ENCODE measurements at regions of chr20 and their contacts with region 1.

Region 1: DNA sequence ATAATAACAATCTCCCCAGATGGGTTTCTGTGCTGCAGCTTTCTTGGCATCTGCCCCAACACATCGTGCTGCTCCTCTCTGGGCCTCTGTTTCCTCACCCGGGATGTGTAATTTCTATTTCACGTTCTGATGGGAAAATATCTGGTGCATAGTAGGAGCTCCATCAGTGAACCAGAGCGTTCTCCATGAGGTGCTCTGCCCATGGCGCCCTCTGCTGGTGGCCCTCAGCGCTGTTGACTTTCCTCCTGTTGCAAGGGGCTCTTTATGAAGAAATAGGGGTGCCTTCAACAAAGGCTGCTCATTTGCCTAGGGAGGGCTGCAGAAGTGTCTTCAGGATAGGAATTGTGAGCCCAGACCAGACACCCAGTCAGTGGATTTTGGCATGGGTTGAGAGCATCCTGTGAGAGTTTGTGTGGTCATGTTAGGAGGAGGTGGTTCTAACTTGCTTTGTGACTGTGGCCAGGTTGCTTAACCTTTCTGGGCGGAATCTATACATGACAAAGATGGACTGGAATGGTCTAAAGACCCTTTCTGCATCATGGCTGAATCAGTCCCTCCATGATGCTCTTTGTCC is 8.1 kb downstream of the SCRT2 start:
- DNase-seq: no peak
- ATAC-seq: peak; percentile 87
- H3K4me3 ChIP-seq: no peak overlapping the region
- H3K27ac ChIP-seq: no peak overlapping the region
- H3K4me1 ChIP-seq: peaks cover 9 to 10% of the 10 kb centered on the region in 2 experiments; a peak in 3 of 4 replicates
- H3K27me3 ChIP-seq: no peaks in the 10 kb centered on the region
- CTCF ChIP-seq: peak; percentile 89 to 99 (median 97)
- POLR2A ChIP-seq: no peak
- RAD21 ChIP-seq: peak; percentile 68

Region 2: GRCh38 chr20:444862-445426 is 222.5 kb before region 1 on chr20:
- CTCF ChIA-PET with region 1: no interaction called
- POLR2A ChIA-PET with region 1: no interaction called
- RAD21 ChIA-PET with region 1: no interaction called
- intact Hi-C with region 1: no loop called
- DNase-seq: no peak
- ATAC-seq: no peak
- H3K4me3 ChIP-seq: no peak overlapping the region
- H3K27ac ChIP-seq: no peak overlapping the region
- H3K4me1 ChIP-seq: 0 out of 4 replicates have a peak, but pooled peaks cover 0 to 4% of the 10 kb centered on the region in 2 experiments
- H3K27me3 ChIP-seq: no peaks in the 10 kb centered on the region
- CTCF ChIP-seq: no peak
- POLR2A ChIP-seq: no peak
- RAD21 ChIP-seq: no peak

Region 3: DNA sequence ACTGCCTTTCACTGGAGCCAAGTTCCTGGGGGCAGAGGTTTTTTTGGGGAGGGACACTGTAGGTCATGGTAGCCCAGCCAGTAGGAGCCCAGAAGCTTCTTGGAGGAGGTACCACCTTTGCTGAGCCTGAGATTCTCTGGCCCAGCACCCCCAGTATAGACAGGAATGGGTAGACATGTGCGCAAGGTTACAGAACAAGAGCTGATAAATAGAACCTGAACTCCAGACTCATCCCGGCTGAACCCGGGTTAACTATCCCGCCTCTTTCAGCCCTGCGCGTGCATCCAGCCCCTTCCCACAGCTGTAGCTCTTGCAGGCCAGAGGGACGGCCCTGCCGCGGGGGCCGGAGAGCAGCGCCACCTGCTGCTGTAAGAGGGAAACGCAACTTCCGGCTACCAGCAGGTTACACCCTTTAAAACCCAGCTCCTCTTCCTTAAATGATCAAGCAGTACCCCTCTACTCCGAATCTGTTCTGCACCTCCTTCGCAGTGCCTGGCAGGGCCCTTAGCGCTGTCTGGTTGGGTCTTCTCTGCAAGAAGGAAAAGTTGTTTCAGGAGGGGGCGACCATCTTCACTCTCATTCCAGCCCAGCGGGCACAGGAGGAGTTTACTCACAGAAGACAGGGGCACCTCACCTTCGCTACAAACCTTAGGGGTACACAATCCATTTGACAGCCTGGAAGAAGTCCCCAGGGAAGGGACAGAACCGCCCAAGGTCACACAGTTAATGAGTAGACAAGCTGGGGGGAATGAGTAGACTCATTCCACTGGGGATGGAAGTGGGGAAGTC is 22.0 kb before region 1 on chr20:
- CTCF ChIA-PET with region 1: interaction called, 14 read pairs
- POLR2A ChIA-PET with region 1: interaction called, 5 read pairs
- RAD21 ChIA-PET with region 1: no interaction called
- intact Hi-C with region 1: no loop called
- DNase-seq: peak; percentile 41
- ATAC-seq: peak; percentile 88
- H3K4me3 ChIP-seq: no peak overlapping the region
- H3K27ac ChIP-seq: peak overlapping the region; percentile 16
- H3K4me1 ChIP-seq: peaks cover 13 to 32% of the 10 kb centered on the region in 2 experiments
- H3K27me3 ChIP-seq: no peaks in the 10 kb centered on the region
- CTCF ChIP-seq: peak; percentile 78 to 94 (median 93)
- POLR2A ChIP-seq: no peak
- RAD21 ChIP-seq: peak; percentile 84

Region 4: GRCh38 chr20:653110-653589 is 14.3 kb before region 1 on chr20 and contains the start of gene SRXN1:
- CTCF ChIA-PET with region 1: interaction called, 11 read pairs
- POLR2A ChIA-PET with region 1: no interaction called
- RAD21 ChIA-PET with region 1: no interaction called
- intact Hi-C with region 1: no loop called
- DNase-seq: peak; percentile 81
- ATAC-seq: peak; percentile 87
- H3K4me3 ChIP-seq: peak within 1 kb of the TSS; percentile 67 to 98
- H3K27ac ChIP-seq: peak within 1 kb of the TSS; percentile 92
- H3K4me1 ChIP-seq: peaks cover 11 to 26% of the 10 kb centered on the region in 2 experiments
- H3K27me3 ChIP-seq: no peaks in the 10 kb centered on the region
- CTCF ChIP-seq: peak; percentile 52 to 90 (median 64)
- POLR2A ChIP-seq: peak; percentile 70
- RAD21 ChIP-seq: peak; percentile 56
- total RNA-seq, gene SRXN1: 80.8 TPM